ENCODE measurements at regions of chrX and their contacts with region 1.

Region 1: DNA sequence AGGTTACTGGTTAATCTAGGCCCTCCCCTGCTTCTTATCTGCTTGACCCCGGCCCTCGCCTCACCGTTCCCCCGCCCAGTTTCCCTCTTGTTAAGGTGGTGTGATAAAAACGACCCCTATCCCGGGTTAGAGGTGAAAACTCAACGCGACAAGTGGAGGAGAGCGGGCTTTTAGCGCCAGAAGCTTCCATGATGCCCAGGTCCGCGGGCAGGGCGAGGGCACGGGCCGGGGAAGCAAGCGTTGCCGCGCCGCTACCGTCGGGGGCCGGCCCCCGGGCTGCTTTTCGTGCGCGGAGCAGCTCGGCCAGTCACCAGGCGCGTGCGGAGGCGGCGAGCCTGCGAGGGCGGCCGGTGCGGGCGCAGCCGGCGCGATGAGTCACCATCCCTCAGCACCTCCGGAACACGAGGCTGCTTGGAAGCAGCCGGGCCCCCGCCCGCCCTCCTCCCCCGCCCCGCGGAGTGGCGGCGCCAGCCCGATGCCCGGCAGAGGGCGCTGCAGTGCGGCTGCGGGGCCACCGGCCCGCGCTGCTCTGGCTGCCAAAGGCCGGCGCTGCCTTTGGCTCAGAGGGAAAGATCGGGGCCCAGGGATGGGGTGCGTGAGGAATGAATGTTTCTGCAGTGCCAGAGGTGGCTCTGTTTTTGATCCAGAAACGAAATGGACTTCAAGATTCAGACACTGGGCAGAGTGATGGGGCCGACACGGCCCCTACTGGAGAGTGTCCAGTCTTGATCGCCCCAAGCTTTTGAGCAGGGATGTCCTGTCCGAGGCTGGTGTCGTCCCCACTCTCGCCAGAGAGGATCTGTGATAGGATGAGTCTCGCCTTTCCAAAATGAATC is 107.8 kb downstream of the NHSL2 start:
- DNase-seq: peak; percentile 82
- H3K27ac ChIP-seq: no peak overlapping the region
- CTCF ChIP-seq: peak; percentile 76

Region 2: DNA sequence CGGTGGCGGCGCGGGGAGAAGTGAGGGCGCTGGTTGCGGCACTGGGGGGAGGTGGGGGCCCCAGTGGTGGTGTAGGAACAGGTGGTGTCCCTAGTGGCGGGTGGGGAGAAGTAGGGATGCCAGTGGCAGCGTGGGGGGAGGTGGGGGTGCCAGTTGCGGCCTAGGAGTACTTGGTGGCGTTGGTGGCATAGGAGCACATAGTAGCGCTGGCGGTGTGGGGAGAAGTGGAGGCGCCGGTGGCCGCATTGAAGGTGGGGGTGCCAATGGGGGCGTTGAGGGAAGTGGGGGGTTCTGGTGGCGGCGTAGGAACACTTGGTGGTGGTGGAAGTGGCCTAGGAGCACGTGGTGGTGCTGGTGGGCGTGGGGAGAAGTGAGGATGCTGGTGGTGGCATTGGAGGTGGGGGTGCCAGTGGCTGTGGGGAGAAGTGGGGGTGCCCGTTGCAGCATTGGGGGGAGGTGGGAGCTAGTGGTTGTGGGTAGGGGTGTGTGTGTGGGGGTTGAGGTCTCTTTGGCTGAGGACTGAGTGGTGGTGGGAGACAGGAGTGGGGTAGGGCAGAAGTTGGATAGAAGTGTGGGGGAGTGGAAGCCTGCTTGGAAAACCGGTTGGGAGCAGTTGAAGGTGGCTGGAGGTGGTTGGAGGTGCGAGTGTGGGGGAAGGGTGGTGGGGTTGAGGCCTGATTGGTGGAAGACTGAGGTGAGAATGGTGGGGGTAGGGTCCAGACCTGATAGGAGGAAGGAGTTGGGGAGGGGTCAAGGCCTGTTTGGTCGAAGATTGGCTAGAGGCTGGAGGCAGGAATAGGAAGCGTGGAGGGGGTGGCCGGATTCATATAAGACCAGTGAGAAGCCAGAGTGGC is 439.1 kb before region 1 on chrX:
- CTCF ChIA-PET with region 1: no interaction called
- POLR2A ChIA-PET with region 1: no interaction called
- DNase-seq: no peak
- H3K27ac ChIP-seq: no peak overlapping the region
- CTCF ChIP-seq: no peak

Region 3: DNA sequence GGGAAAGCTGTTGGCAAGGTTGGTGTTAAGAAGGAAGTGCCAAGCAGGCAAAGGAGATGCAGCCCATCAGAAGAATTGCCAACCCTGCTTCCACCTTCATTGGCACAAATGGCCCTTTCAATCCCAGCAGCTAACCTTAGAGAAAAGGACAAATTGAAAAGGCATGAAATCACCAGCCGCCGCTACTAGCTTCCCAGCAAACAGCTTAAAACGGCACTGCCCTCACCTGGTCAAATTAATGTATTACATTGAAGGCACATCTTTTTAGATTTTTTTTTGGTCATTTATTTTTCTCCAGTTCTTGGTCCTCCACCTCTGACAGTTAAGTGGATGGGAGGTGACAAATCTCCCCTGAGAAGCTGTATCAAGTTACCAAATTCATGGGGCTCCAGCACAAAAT is 158.9 kb before region 1 on chrX:
- CTCF ChIA-PET with region 1: no interaction called
- POLR2A ChIA-PET with region 1: no interaction called
- DNase-seq: peak; percentile 8
- H3K27ac ChIP-seq: no peak overlapping the region
- CTCF ChIP-seq: peak; percentile 49

Region 4: GRCh38 chrX:71998836-71999509 is 19.5 kb before region 1 on chrX:
- CTCF ChIA-PET with region 1: no interaction called
- POLR2A ChIA-PET with region 1: no interaction called
- DNase-seq: peak; percentile 21
- H3K27ac ChIP-seq: no peak overlapping the region
- CTCF ChIP-seq: peak; percentile 53

Region 5: GRCh38 chrX:72041871-72042851 is 23.7 kb after region 1 on chrX:
- CTCF ChIA-PET with region 1: interaction called, 10 read pairs
- POLR2A ChIA-PET with region 1: interaction called, 3 read pairs
- DNase-seq: no peak
- H3K27ac ChIP-seq: no peak overlapping the region
- CTCF ChIP-seq: no peak

Region 6: GRCh38 chrX:72181178-72182125 is 163.0 kb after region 1 on chrX and contains the start of gene PIN4:
- CTCF ChIA-PET with region 1: no interaction called
- POLR2A ChIA-PET with region 1: no interaction called
- DNase-seq: peak; percentile 80
- H3K27ac ChIP-seq: peak within 1 kb of the TSS; percentile 92
- CTCF ChIP-seq: no peak

Measured in RWPE1 (cell line).